A549 (cell line): ENCODE measurements at regions of chr10 and their contacts with region 1.

Region 1: DNA sequence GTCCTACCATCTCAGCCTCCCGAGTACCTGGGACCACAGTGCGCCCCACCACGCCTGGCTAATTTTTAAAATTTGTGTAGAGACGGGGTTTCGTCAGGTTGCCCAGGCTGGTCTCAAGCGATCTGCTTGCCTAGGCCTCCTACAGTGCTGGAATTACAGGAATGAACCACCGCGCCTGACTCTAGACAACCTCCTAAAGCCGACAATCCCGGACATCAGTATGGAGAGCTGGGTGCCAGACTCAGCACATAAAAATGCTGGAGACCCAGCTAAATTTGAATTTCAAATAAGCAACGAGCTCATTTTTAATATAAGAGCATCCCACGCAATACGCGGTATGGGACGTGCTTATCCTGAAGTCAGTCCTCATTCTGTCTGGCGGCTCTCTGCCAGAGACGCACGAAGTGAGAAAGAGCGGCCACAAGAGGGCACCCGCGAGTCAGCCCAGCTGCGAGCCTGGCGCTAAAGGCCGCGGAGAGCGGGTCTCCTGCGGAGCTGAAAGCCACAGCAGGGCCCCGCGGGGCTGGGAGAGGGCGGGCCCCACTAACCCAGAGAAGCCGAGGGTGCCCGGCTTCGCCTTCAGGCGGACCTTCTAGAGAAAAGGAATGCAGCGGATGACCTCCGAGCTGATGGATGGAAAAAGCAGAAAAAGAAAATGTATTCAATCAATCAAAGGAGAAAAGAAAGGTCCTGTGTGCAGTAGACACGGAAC is 7.0 kb downstream of the CALY start:
- DNase-seq: peak; percentile 85 to 89
- ATAC-seq: peak; percentile 70 to 90
- H3K4me3 ChIP-seq: peak overlapping the region; percentile 23; the same call in 1 of the 3 replicates
- H3K27ac ChIP-seq: peak overlapping the region in 1 of 2 experiments; percentile 65; a peak in 2 of 6 replicates
- H3K4me1 ChIP-seq: peaks cover 23% of the 10 kb centered on the region
- CTCF ChIP-seq: peak; percentile 92
- EP300 ChIP-seq: no peak
- POLR2A ChIP-seq: no peak
- RAD21 ChIP-seq: peak; percentile 75 to 83

Region 2: DNA sequence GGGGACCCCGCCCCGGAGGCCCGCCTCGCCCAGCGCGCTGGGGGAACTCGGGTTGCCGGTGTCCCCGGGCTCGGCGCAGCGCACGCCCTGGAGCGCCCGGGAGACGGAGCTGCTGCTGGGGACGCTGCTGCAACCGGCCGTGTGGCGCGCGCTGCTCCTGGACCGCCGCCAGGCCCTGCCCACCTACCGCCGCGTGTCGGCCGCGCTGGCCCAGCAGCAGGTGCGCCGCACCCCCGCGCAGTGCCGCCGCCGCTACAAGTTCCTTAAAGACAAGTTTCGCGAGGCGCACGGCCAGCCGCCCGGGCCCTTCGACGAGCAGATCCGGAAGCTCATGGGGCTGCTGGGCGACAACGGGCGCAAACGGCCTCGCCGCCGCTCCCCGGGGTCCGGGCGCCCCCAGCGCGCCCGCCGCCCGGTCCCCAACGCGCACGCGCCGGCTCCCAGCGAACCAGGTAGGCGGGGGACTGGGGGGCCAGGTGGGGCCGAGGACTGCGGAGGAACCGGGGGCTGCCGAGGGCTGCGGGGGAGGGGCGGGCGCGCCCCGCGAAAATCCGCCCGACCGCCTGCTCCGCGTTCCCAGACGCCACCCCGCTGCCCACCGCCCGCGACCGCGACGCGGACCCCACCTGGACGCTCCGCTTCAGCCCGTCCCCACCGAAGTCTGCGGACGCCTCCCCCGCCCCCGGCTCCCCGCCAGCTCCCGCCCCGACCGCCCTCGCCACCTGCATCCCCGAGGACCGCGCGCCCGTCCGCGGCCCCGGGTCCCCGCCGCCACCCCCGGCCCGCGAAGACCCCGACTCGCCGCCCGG is 99.1 kb before region 1 on chr10:
- CTCF ChIA-PET with region 1: no interaction called
- POLR2A ChIA-PET with region 1: no interaction called
- DNase-seq: peak in 1 of 2 experiments; percentile 48
- ATAC-seq: peak in 1 of 2 experiments; percentile 25; a peak in 1 of 6 replicates
- H3K4me3 ChIP-seq: peak overlapping the region; percentile 37
- H3K27ac ChIP-seq: peak overlapping the region in 1 of 2 experiments; percentile 37; a peak in 2 of 6 replicates
- H3K4me1 ChIP-seq: no peaks in the 10 kb centered on the region; the same call in 2 of the 3 replicates
- CTCF ChIP-seq: no peak
- EP300 ChIP-seq: no peak
- POLR2A ChIP-seq: no peak
- RAD21 ChIP-seq: no peak

Region 3: GRCh38 chr10:133318494-133319127 is 11.0 kb before region 1 on chr10:
- CTCF ChIA-PET with region 1: interaction called, 56 read pairs
- POLR2A ChIA-PET with region 1: no interaction called
- DNase-seq: peak; percentile 68 to 84
- ATAC-seq: peak; percentile 87 to 96
- H3K4me3 ChIP-seq: peak overlapping the region; percentile 62
- H3K27ac ChIP-seq: peak overlapping the region; percentile 80 to 98
- H3K4me1 ChIP-seq: 0 out of 3 replicates have a peak, but pooled peaks cover 7% of the 10 kb centered on the region
- CTCF ChIP-seq: peak; percentile 74
- EP300 ChIP-seq: no peak
- POLR2A ChIP-seq: peak; percentile 33
- RAD21 ChIP-seq: peak; percentile 18 to 37; a peak in 2 of 5 replicates

Region 4: GRCh38 chr10:133357285-133358151 is 27.9 kb after region 1 on chr10 and contains the start of gene FUOM:
- CTCF ChIA-PET with region 1: interaction called, 38 read pairs
- POLR2A ChIA-PET with region 1: no interaction called
- DNase-seq: peak; percentile 48 to 67
- ATAC-seq: peak; percentile 33 to 77; a peak in 4 of 6 replicates
- H3K4me3 ChIP-seq: peak within 1 kb of the TSS; percentile 78
- H3K27ac ChIP-seq: peak within 1 kb of the TSS; percentile 84 to 86
- H3K4me1 ChIP-seq: peaks cover 10% of the 10 kb centered on the region; the same call in 1 of the 3 replicates
- CTCF ChIP-seq: no peak
- EP300 ChIP-seq: no peak
- POLR2A ChIP-seq: peak; percentile 32; the same call in 1 of the 2 replicates
- RAD21 ChIP-seq: no peak
- polyA plus RNA-seq, gene FUOM: 7.6 and 8.1 TPM in 2 replicates

Region 5: DNA sequence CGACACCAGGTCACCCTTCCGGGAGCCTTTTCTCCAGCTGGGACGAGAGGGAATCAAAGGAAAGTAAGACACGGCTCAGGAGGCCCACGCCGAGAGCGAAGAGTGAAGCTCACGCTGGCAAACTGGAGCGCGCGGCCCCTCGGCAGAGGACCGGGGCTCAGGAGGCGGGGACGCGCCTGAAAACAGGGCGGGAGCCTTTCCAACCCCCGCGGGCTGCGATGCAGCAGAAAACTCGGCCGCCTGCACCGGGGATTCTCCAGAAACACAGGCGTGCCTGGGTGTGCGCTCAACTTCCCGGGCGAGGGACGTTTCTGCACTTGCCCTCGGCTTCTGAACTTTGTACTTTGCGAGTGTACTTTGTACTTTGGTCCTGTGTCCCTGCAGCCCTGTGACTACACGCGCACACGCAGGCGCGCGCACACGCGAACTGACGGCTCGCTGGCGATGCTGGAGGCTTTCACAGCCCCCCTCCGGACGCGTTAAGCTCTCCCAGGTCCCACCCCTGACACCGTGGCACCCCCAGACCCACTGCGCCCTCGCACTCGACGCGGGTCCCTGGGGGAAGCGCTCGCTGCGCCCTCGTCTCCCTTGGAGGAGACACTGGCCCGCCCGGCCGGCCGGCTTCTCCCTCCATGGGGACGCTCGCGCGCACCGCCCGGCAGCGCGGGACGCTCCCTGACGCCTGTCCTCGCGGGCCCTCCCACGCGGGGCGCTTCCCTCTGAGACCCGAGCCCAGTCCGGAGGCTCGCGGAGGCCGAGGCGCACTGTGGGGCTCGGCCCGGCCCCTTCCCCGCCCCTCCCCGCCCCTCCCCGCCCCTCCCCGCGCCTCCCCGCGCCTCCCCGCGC is 48.8 kb after region 1 on chr10:
- CTCF ChIA-PET with region 1: interaction called, 15 read pairs
- POLR2A ChIA-PET with region 1: interaction called, 4 read pairs
- DNase-seq: peak; percentile 45 to 48
- ATAC-seq: peak; percentile 67 to 81
- H3K4me3 ChIP-seq: peak overlapping the region; percentile 94
- H3K27ac ChIP-seq: peak overlapping the region; percentile 76 to 92
- H3K4me1 ChIP-seq: peaks cover 9% of the 10 kb centered on the region; the same call in 1 of the 3 replicates
- CTCF ChIP-seq: no peak
- EP300 ChIP-seq: no peak
- POLR2A ChIP-seq: peak; percentile 36
- RAD21 ChIP-seq: no peak

Region 6: DNA sequence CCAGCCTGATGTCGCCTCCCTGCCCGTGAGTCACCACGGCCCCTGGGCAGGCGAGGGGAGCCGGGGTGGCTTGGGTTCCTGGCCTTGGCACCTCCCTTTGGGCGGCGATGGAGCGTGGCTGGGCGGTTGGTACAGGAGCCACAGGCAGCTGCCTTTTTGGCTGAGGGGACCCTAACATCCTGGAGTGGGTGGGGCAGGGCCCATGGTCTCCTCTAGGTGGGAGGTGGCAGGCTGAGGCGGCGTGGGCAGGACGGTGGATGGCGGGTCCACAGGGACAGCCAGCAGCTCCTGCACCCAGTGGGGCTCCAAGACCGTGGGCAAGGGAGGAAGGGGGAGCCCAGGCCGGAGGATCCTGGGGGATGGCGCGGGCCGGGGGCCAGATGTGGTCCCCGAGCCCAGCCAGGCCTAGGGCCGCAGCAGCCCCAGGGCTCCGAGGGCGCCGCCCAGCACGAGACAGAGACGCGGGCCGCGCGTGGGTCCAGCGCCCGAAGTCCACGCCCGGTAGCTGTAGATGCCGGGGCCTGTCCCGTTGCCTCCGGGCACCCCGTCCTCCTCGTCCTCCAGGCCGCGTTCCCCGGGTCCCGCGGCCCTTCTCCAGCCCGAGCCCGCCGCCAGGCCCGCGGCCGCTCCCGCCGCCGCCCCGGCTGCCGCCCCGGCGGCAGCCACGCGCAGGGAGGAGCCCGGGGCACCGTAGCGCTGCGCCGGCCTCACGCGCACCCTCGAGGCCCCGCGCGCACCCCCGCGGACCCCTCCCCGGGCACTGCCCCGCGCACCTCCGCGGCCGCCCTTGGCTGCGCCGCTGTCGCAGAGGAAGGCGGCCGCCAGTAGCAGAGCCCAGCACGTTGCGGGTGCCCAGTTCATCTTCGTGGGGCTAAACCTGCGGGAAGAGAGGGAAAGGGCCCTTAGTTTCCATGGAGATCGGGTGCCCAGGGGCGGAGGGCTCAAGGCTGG is 93.4 kb after region 1 on chr10:
- CTCF ChIA-PET with region 1: interaction called, 23 read pairs
- POLR2A ChIA-PET with region 1: no interaction called
- DNase-seq: no peak
- ATAC-seq: peak; percentile 28; a peak in 5 of 6 replicates
- H3K4me3 ChIP-seq: peak overlapping the region; percentile 36; the same call in 2 of the 3 replicates
- H3K27ac ChIP-seq: peak overlapping the region in 1 of 2 experiments; percentile 71; a peak in 2 of 6 replicates
- H3K4me1 ChIP-seq: peaks cover 7% of the 10 kb centered on the region; the same call in 2 of the 3 replicates
- CTCF ChIP-seq: no peak
- EP300 ChIP-seq: no peak
- POLR2A ChIP-seq: no peak
- RAD21 ChIP-seq: no peak